ENCODE measurements at regions of chr5 and their contacts with region 1.

Region 1: DNA sequence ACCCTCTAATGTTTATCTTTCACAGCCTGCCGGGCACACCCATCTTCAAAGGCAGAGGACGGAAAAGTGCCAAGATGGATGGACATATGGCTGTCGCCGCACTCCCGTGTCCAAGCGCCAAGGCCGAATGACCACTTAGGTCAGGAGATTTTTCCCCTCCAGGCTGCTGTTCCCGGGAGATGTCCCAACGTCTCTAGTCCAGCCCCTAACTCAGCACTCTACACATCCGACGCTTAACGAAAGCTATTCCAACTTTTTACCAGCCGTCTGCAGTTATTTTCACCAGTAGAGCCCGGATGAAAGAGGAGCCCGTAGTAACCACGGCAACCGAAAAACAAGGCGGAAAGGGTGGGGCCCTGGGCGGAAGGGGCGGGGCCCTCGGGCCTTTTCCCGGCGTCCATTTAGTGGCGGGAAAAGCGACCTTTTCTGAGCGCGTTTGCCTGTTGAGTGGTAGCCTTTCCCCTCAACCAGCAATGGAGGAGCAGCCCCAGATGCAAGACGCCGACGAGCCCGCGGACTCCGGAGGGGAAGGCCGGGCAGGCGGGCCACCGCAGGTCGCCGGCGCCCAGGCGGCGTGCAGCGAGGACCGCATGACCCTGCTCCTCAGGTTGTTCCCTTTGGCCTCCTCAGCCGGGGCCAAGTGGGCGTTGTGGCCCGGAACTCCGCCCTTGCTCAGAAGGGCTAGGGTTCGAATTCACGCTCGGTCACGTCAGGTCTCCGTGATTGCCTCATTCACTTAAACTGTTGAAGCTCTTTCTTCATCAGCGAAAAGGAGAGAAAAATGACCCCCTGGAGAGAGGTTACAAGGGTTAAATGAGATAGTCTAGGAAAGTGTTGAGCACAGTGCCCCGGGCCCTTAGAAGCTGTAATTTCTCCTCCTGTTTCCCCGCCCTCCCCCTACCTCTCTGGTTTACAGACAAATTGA is at the start of gene CENPH:
- DNase-seq: peak; percentile 91
- ATAC-seq: peak; percentile 100
- total RNA-seq, gene CENPH: 2.5 to 3.4 TPM

Region 2: DNA sequence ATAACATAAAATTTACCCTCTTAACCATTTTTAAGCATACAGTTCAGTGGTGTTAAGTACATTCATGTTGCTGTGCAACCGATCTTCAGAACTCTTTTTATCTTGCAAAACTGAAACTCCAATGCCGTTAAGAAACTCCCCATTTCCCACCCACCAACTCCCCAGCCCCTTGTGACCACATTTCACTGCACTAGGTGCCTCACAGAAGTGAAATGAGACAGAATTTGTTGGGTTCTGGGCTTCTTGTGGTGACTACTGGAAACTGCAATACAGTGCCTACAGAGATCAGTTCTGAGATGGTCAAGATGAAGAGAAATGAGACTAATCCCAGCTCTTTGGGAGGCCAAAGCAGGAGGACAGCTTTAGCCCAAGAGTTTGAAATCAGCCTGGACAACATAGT is 297.7 kb before region 1 on chr5:
- intact Hi-C with region 1: no loop called
- DNase-seq: no peak
- ATAC-seq: no peak

Region 3: DNA sequence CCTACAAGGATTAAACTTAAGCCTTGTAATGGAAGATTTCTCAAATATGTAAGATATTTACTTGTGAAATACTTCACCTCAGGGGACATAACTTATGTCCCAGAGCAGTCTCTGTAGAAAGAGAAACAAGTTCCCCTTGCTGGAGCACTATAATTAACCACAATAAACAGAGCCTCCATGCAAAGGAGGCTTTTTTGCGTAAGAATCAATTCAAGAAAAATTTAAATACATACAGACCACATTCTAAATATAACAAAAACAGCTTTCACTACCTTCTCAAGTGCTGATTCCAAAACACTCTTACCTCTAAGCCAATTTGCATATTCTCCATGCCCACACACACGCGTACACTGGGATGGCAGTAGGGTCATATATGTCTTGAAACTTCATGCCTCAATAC is 53.1 kb before region 1 on chr5:
- intact Hi-C with region 1: no loop called
- DNase-seq: no peak
- ATAC-seq: no peak

Region 4: GRCh38 chr5:69234457-69235268 is 45.2 kb after region 1 on chr5 and contains the start of gene CDK7:
- intact Hi-C with region 1: loop called in 1 of 2 experiments (anchors 5 kb)
- DNase-seq: peak; percentile 96
- ATAC-seq: peak; percentile 100
- total RNA-seq, gene CDK7: 11.1 to 14.4 TPM

Region 5: GRCh38 chr5:69250598-69250997 is 61.2 kb after region 1 on chr5:
- intact Hi-C with region 1: no loop called
- DNase-seq: no peak
- ATAC-seq: no peak